ENCODE measurements at regions of chr5 and their contacts with region 1.

Region 1: DNA sequence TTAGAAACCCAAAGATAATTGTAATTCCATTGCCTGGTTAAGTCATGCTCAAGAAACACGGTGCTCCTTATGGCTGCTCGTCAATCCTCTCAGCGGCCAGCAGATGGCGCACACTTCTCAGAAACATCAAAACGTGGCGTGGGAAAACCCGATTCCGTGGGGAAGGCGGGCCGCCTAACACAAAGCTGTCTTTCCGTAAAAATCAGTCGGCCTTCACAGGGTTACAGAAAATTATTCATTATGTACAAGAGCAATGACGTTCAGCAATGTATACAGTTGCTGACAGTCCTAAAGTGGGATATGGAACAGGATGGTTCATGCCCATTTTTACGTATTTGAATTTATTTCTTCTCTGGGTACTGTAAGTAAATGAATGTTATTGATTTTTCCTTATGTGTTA is 83.5 kb downstream of the PDE4D start:
- DNase-seq: peak; percentile 86
- H3K4me3 ChIP-seq: peak overlapping the region in 1 of 8 donors; percentile 7
- H3K27ac ChIP-seq: no peak overlapping the region
- H3K4me1 ChIP-seq: peaks cover 0 to 8% (median 5%) of the 10 kb centered on the region in 6 donors
- H3K27me3 ChIP-seq: peaks cover 0 to 5% (median 0%) of the 10 kb centered on the region in 7 donors
- CTCF ChIP-seq: peak; percentile 55 to 94 (median 85)
- POLR2A ChIP-seq: no peak

Region 2: DNA sequence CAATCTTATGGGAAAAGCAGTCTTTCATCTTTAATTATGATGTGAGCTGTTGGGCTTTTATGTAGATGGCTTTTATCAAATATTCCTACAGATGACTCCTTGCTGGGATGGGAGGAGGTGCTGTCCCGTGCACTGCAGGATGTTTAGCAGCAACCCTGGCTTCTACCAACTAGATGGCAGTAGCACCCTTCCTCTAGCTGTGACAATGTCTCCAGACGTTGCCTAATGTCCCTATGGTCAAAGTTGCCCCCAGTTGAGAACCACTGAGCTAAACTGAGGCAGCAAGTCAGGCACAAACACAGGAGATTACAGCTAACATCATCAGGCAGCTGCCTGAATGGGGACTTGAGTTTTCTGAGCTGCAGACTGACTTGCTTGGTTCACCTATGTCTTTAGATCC is 485.4 kb after region 1 on chr5:
- intact Hi-C with region 1: loop called (anchors 10 kb)
- DNase-seq: no peak
- H3K4me3 ChIP-seq: no peak overlapping the region
- H3K27ac ChIP-seq: no peak overlapping the region
- H3K4me1 ChIP-seq: no peaks in the 10 kb centered on the region
- H3K27me3 ChIP-seq: no peaks in the 10 kb centered on the region
- CTCF ChIP-seq: peak in 4 of 11 experiments; percentile 27 to 36 (median 32)
- POLR2A ChIP-seq: no peak

Region 3: GRCh38 chr5:60586307-60586901 is 776.4 kb after region 1 on chr5:
- intact Hi-C with region 1: loop called (anchors 10 kb)
- DNase-seq: no peak
- H3K4me3 ChIP-seq: no peak overlapping the region
- H3K27ac ChIP-seq: no peak overlapping the region
- H3K4me1 ChIP-seq: no peaks in the 10 kb centered on the region
- H3K27me3 ChIP-seq: no peaks in the 10 kb centered on the region
- CTCF ChIP-seq: peak in 9 of 11 experiments; percentile 6 to 53 (median 25)
- POLR2A ChIP-seq: no peak

Region 4: GRCh38 chr5:60672693-60673264 is 862.7 kb after region 1 on chr5:
- intact Hi-C with region 1: loop called (anchors 5 kb)
- DNase-seq: no peak
- H3K4me3 ChIP-seq: no peak overlapping the region
- H3K27ac ChIP-seq: no peak overlapping the region
- H3K4me1 ChIP-seq: peaks cover 0 to 4% (median 0%) of the 10 kb centered on the region in 6 donors
- H3K27me3 ChIP-seq: no peaks in the 10 kb centered on the region
- CTCF ChIP-seq: no peak
- POLR2A ChIP-seq: no peak

Measured in spleen (tissue), 13 donors.